Colonic mucosa (tissue), 4 donors: ENCODE measurements at regions of chr18 and their contacts with region 1.

Region 1: GRCh38 chr18:13558124-13558523 is 168.2 kb downstream of the FAM210A start:
- DNase-seq: no peak
- H3K4me3 ChIP-seq: no peak overlapping the region
- H3K27ac ChIP-seq: no peak overlapping the region
- H3K4me1 ChIP-seq: no peaks in the 10 kb centered on the region
- H3K27me3 ChIP-seq: no peaks in the 10 kb centered on the region
- CTCF ChIP-seq: peak; percentile 33

Region 2: DNA sequence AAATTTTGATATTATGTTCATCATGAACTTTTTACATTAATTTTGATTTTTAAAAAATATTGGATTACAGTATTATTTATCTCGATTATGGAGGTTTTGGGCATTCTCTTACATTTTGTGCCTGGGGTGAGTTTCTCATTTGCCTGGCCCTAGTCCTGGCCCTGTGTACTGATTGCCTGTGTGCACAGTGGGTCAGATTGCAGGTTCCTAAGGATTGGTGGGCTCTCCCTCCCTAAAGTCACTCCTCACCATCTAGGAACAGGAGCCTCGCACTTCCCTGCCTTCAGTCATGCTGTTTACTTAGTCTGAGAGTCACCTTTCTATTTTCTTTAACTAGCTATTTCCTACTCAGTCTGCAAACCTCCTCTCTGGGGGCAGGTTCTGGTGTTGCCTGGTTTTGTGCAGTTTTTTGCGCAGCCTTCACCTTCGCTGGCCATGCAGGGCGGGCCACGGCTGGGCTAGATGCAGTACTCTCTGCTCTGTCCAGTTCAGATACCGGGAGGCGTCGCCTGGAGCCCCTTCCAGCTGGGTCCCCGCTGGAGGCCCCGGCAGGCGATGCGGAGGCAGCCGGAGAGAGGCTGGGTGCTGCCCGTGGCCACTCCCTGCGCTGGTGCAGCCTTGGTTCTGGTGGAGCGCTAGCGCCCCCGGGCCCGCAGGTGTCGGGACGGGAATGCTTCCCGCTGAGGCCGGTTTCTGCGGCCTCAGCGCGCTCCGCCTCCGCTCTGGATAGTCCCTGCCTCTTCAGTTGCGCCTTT is 242.6 kb after region 1 on chr18:
- intact Hi-C with region 1: loop called (anchors 10 kb)
- DNase-seq: peak; percentile 82
- H3K4me3 ChIP-seq: no peak overlapping the region
- H3K27ac ChIP-seq: no peak overlapping the region
- H3K4me1 ChIP-seq: peaks cover 4% of the 10 kb centered on the region
- H3K27me3 ChIP-seq: no peaks in the 10 kb centered on the region
- CTCF ChIP-seq: no peak

Region 3: DNA sequence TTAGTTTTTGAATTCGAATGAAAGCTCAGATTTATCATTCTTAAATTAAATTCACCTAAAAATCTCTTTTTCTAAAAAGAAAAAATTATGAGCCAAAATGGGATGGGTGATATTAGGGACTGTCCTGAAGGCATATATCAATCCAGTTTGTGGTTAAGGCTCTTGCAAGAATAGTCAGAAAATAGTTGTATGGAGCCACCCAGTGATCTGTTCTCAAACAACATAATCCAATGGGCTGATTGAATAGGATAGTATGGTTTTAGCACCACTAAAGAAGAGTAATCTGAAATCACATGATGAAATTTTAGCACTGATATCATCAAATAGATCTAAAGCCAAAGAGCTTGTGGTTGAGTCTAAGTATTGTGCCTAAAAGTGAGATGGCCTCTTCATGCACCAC is 485.8 kb after region 1 on chr18:
- intact Hi-C with region 1: no loop called
- DNase-seq: no peak
- H3K4me3 ChIP-seq: no peak overlapping the region
- H3K27ac ChIP-seq: no peak overlapping the region
- H3K4me1 ChIP-seq: no peaks in the 10 kb centered on the region
- H3K27me3 ChIP-seq: no peaks in the 10 kb centered on the region
- CTCF ChIP-seq: no peak